ENCODE measurements at regions of chr6 and their contacts with region 1.

Region 1: GRCh38 chr6:113858480-113859348 is 1.6 kb downstream of the MARCKS start:
- DNase-seq: peak; percentile 73 to 93
- H3K4me3 ChIP-seq: peak overlapping the region; percentile 61 to 77
- H3K27ac ChIP-seq: peak overlapping the region; percentile 93 to 99
- H3K4me1 ChIP-seq: peaks cover 0 to 26% (median 5%) of the 10 kb centered on the region in 4 donors
- H3K27me3 ChIP-seq: no peaks in the 10 kb centered on the region
- CTCF ChIP-seq: peak; percentile 90 to 98

Region 2: GRCh38 chr6:113416170-113416569 is 442.5 kb before region 1 on chr6:
- intact Hi-C with region 1: loop called (anchors 5 kb)
- DNase-seq: no peak
- H3K4me3 ChIP-seq: no peak overlapping the region
- H3K27ac ChIP-seq: no peak overlapping the region
- H3K4me1 ChIP-seq: peaks cover 0 to 21% (median 4%) of the 10 kb centered on the region in 4 donors
- H3K27me3 ChIP-seq: no peaks in the 10 kb centered on the region
- CTCF ChIP-seq: no peak

Region 3: DNA sequence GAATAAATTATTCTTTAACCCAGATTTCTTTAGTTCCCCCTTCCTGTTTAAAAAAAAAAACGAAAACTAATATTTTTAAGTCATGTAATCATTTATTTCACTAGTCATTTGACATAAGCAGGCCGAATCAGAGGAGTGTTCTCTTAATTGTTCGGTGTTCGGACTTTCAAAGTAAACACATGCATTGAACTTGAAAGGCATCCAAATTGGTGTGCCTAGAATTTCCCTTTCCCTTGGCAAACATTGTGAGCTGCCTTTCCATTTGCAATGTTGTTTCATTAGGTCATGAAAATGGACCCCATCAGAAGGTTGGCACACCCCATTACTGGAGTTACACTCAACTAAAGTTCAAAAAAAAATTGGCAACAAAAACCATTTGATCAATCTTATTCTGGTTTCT is 284.6 kb before region 1 on chr6:
- intact Hi-C with region 1: no loop called
- DNase-seq: no peak
- H3K4me3 ChIP-seq: no peak overlapping the region
- H3K27ac ChIP-seq: no peak overlapping the region
- H3K4me1 ChIP-seq: no peaks in the 10 kb centered on the region
- H3K27me3 ChIP-seq: no peaks in the 10 kb centered on the region
- CTCF ChIP-seq: no peak

Region 4: DNA sequence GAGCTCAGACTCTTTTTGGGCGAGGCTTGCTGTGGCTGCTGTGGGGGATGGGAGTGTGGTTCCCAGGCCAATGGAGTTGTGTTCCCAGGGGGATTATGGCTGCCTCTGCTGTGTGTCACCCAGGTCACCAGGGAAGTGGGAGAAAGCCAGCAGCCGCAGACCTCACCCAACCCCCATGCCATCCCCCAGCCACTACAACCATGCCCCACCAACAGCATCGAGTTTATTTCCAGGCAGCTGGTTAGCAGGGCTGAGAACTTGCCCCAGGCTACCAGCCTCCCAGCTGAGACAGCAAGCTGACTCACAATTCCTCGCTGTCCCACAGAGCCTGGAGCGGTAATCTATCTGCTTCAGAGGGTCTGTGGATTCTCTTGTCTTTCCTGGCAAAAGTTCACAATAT is 1870.3 kb after region 1 on chr6:
- intact Hi-C with region 1: no loop called
- DNase-seq: no peak
- H3K4me3 ChIP-seq: no peak overlapping the region
- H3K27ac ChIP-seq: no peak overlapping the region
- H3K4me1 ChIP-seq: no peaks in the 10 kb centered on the region
- H3K27me3 ChIP-seq: no peaks in the 10 kb centered on the region
- CTCF ChIP-seq: no peak

Measured in tibial artery (tissue), 4 donors.